HepG2 (cell line): ENCODE measurements at regions of chr2 and their contacts with region 1.

Region 1: GRCh38 chr2:14944562-14945346 is 312.2 kb downstream of the LRATD1 start:
- DNase-seq: peak; percentile 58
- ATAC-seq: peak; percentile 99
- H3K4me3 ChIP-seq: no peak overlapping the region
- H3K27ac ChIP-seq: no peak overlapping the region
- H3K4me1 ChIP-seq: no peaks in the 10 kb centered on the region
- H3K27me3 ChIP-seq: no peaks in the 10 kb centered on the region
- CTCF ChIP-seq: peak; percentile 83
- EP300 ChIP-seq: no peak
- POLR2A ChIP-seq: no peak
- RAD21 ChIP-seq: peak; percentile 64

Region 2: DNA sequence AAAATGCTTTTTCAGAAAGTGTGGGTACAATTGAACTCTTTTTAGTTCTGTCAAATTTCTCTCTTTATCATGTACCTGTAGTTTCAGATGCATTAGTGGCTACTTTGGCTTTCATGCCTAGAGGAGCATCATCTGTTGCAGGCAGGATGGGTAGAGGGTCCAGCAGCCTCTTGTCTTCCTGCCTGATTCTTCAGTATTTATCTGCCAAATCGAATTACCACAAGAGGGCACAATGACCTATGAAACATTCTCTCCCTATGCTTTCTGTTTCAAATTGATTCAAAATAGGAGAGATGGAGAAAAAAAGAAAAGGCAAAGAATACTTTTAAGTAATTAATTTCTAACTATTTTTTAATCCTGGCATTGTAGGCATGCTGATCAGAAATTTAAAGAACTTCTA is 1750.9 kb before region 1 on chr2:
- CTCF ChIA-PET with region 1: no interaction called
- POLR2A ChIA-PET with region 1: no interaction called
- in situ Hi-C with region 1: loop called (anchors 25 kb)
- intact Hi-C with region 1: no loop called
- DNase-seq: peak; percentile 14
- ATAC-seq: peak; percentile 56
- H3K4me3 ChIP-seq: no peak overlapping the region
- H3K27ac ChIP-seq: no peak overlapping the region
- H3K4me1 ChIP-seq: no peaks in the 10 kb centered on the region
- H3K27me3 ChIP-seq: no peaks in the 10 kb centered on the region
- CTCF ChIP-seq: peak; percentile 49
- EP300 ChIP-seq: no peak
- POLR2A ChIP-seq: no peak
- RAD21 ChIP-seq: no peak

Region 3: GRCh38 chr2:14642499-14642898 is 302.3 kb before region 1 on chr2:
- CTCF ChIA-PET with region 1: interaction called, 3 read pairs
- POLR2A ChIA-PET with region 1: no interaction called
- in situ Hi-C with region 1: no loop called
- intact Hi-C with region 1: loop called (anchors 2 kb)
- DNase-seq: no peak
- ATAC-seq: peak; percentile 61
- H3K4me3 ChIP-seq: no peak overlapping the region
- H3K27ac ChIP-seq: no peak overlapping the region
- H3K4me1 ChIP-seq: no peaks in the 10 kb centered on the region
- H3K27me3 ChIP-seq: no peaks in the 10 kb centered on the region
- CTCF ChIP-seq: peak; percentile 27; the same call in 1 of the 2 replicates
- EP300 ChIP-seq: no peak
- POLR2A ChIP-seq: no peak
- RAD21 ChIP-seq: no peak